ENCODE measurements at regions of chr6 and their contacts with region 1.

Region 1: GRCh38 chr6:154969796-154970195 is 25.3 kb upstream of the TIAM2 start:
- DNase-seq: no peak
- ATAC-seq: no peak
- H3K4me3 ChIP-seq: no peak overlapping the region
- H3K27ac ChIP-seq: no peak overlapping the region
- H3K4me1 ChIP-seq: no peaks in the 10 kb centered on the region
- H3K27me3 ChIP-seq: no peaks in the 10 kb centered on the region
- CTCF ChIP-seq: no peak
- POLR2A ChIP-seq: no peak
- RAD21 ChIP-seq: no peak

Region 2: DNA sequence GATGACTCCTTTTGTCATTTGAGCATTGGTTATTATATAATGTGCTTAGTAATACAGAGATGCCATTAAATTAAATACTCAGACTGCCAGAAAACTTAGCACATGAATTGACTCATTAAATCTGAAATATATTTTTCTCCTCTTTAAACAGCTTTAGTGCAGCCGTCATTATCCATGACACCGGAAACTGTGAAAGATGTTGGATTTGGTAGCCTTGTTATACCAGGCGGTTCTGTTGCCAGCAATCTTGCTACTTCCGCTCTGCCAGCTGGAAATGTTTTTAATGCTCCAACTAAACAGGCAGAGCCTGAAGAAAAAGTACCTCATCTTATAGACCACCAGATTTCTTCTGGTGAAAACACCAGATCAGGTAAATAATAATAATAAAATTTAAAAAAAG is 139.0 kb before region 1 on chr6:
- CTCF ChIA-PET with region 1: no interaction called
- POLR2A ChIA-PET with region 1: no interaction called
- RAD21 ChIA-PET with region 1: no interaction called
- intact Hi-C with region 1: no loop called
- DNase-seq: no peak
- ATAC-seq: no peak
- H3K4me3 ChIP-seq: no peak overlapping the region
- H3K27ac ChIP-seq: no peak overlapping the region
- H3K4me1 ChIP-seq: no peaks in the 10 kb centered on the region
- H3K27me3 ChIP-seq: no peaks in the 10 kb centered on the region
- CTCF ChIP-seq: no peak
- POLR2A ChIP-seq: no peak
- RAD21 ChIP-seq: no peak

Region 3: DNA sequence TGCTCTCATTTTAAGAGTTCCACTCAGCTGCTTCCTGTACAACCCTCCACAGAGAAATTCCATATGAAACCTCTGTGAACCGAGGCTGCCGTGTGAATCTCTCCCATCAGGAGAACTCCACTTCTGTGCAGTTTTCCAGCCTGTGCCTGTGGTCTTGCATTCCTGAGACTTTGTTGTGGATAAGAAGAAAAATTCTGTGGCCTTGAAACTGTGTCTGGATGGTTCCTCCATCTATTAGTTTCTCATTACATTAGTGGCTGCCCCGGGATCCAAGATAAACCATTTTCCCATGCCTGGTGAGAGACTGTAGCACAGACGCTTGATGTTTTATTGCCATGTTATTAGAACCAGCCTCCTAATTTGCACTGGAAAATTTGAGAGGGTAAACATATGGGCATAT is 15.4 kb before region 1 on chr6:
- CTCF ChIA-PET with region 1: no interaction called
- POLR2A ChIA-PET with region 1: no interaction called
- RAD21 ChIA-PET with region 1: no interaction called
- intact Hi-C with region 1: loop called (anchors 2 kb)
- DNase-seq: no peak
- ATAC-seq: no peak
- H3K4me3 ChIP-seq: no peak overlapping the region
- H3K27ac ChIP-seq: no peak overlapping the region
- H3K4me1 ChIP-seq: peaks cover 11 to 16% of the 10 kb centered on the region in 2 experiments
- H3K27me3 ChIP-seq: no peaks in the 10 kb centered on the region
- CTCF ChIP-seq: no peak
- POLR2A ChIP-seq: no peak
- RAD21 ChIP-seq: no peak

Measured in HCT116 (cell line).